Body of pancreas (tissue), 4 donors: ENCODE measurements at regions of chr7 and their contacts with region 1.

Region 1: DNA sequence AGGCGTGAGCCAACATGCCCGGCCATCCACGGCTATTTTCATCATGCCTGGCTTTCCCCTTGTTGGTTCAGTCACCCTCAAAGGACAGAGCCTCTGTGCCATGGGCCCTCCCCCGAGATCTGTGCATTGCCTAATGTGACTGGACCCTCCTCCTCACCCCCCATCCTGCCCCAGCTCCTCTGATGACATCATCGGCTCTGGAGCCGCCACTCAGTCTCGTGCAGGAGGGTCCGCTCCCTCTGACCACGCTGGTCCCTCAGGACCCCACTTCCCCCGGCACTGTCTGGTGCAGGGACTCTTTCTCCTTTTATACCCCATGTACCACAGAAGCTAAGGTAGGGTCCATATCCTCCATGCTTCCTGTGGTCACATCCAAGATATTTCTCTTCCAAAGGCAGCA is 33.2 kb upstream of the BAIAP2L1 start:
- DNase-seq: no peak
- ATAC-seq: no peak
- H3K4me3 ChIP-seq: no peak overlapping the region
- H3K27ac ChIP-seq: no peak overlapping the region
- H3K4me1 ChIP-seq: no peaks in the 10 kb centered on the region
- H3K27me3 ChIP-seq: no peaks in the 10 kb centered on the region
- CTCF ChIP-seq: no peak
- POLR2A ChIP-seq: no peak

Region 2: DNA sequence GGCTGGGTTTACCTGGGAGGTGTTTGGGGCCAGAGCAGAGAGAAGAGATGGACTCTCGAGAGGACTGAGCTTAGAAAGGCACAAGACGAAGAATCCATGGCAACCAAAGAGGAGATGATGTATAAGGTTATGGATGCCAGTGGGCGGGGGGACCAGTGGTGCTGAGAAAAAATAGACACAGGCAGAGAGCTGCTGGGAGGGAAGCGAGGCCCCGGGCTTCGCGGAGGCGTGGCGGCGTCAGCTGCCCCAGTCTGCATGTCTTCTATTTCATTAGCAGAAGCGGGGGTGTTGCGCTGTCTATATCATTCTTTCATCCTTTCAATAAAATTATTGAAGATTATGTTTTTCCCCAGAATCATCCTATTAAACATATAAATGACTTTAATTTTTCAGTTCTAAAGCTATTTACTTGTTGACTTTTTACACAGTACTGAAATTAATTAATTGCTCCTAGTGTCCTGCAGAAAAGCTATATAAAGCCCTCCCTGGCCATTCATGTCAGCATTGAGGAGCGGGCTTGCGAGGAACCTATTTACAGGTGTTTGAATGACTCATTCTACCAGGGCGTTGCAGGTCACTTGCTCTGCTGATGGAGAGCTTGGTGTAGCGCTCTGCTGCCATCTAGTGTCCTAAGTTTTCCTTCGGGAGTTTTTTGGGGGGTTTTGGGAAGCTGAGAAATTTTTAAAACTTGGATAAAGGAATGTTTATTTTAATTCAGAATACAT is 265.8 kb before region 1 on chr7:
- intact Hi-C with region 1: no loop called
- DNase-seq: peak; percentile 80 to 90 (median 85)
- ATAC-seq: peak; percentile 68
- H3K4me3 ChIP-seq: no peak overlapping the region
- H3K27ac ChIP-seq: peak overlapping the region in 3 of 4 donors; percentile 22 to 83 (median 62)
- H3K4me1 ChIP-seq: peaks cover 72% of the 10 kb centered on the region
- H3K27me3 ChIP-seq: no peaks in the 10 kb centered on the region
- CTCF ChIP-seq: peak; percentile 84 to 95 (median 91)
- POLR2A ChIP-seq: no peak

Region 3: DNA sequence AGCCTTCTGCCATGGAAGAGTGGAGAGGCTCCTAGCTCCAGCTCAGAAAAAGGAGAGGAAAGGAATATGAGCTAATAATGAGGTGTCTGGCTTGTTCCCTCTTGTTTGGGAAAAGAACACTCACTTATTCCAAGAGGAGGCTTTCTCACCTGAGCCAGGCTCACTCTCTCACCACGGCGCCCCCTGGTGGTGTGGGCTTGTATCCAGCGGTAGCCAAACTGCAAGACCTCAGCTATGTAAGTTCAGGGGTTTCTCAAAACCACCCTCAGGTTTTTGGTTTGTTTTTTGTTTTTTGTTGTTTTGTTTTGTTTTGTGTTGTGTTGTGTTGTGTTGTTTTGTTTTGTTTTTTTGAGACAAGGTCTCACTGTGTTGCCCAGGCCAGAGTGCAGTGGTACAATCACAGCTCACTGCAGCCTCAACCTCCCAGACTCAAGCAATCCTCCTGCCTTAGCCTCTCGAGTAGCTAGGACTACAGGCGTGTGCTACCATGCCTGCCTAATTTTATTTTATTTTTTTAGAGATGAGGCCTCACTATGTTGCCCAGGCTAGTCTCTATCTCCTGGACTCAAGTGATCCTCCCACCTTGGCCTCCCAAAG is 311.7 kb after region 1 on chr7:
- intact Hi-C with region 1: loop called (anchors 2 kb)
- DNase-seq: peak; percentile 79 to 87 (median 85)
- ATAC-seq: peak; percentile 53
- H3K4me3 ChIP-seq: no peak overlapping the region
- H3K27ac ChIP-seq: no peak overlapping the region
- H3K4me1 ChIP-seq: no peaks in the 10 kb centered on the region
- H3K27me3 ChIP-seq: no peaks in the 10 kb centered on the region
- CTCF ChIP-seq: peak; percentile 77 to 84 (median 79)
- POLR2A ChIP-seq: no peak